ENCODE measurements at regions of chr6 and their contacts with region 1.

Region 1: GRCh38 chr6:42021847-42022754 is 28.2 kb upstream of the TAF8 start:
- DNase-seq: peak; percentile 98
- H3K4me3 ChIP-seq: peak overlapping the region; percentile 35
- H3K27ac ChIP-seq: peak overlapping the region; percentile 98
- H3K4me1 ChIP-seq: peaks cover 96% of the 10 kb centered on the region
- CTCF ChIP-seq: peak; percentile 45

Region 2: GRCh38 chr6:41705996-41706835 is 315.9 kb before region 1 on chr6:
- CTCF ChIA-PET with region 1: no interaction called
- POLR2A ChIA-PET with region 1: no interaction called
- intact Hi-C with region 1: loop called (anchors 5 kb)
- DNase-seq: peak; percentile 94
- H3K4me3 ChIP-seq: peak overlapping the region; percentile 69
- H3K27ac ChIP-seq: peak overlapping the region; percentile 90
- H3K4me1 ChIP-seq: peaks cover 74% of the 10 kb centered on the region
- CTCF ChIP-seq: peak; percentile 96

Region 3: GRCh38 chr6:41936073-41936837 is 85.8 kb before region 1 on chr6:
- CTCF ChIA-PET with region 1: interaction called, 9 read pairs
- POLR2A ChIA-PET with region 1: interaction called, 17 read pairs
- intact Hi-C with region 1: loop called (anchors 1 kb)
- DNase-seq: peak; percentile 81
- H3K4me3 ChIP-seq: peak overlapping the region; percentile 93
- H3K27ac ChIP-seq: peak overlapping the region; percentile 82
- H3K4me1 ChIP-seq: peaks cover 66% of the 10 kb centered on the region
- CTCF ChIP-seq: peak; percentile 86

Region 4: GRCh38 chr6:41958022-41958856 is 63.9 kb before region 1 on chr6:
- CTCF ChIA-PET with region 1: no interaction called
- POLR2A ChIA-PET with region 1: no interaction called
- intact Hi-C with region 1: no loop called
- DNase-seq: no peak
- H3K4me3 ChIP-seq: no peak overlapping the region
- H3K27ac ChIP-seq: no peak overlapping the region
- H3K4me1 ChIP-seq: peaks cover 6% of the 10 kb centered on the region
- CTCF ChIP-seq: no peak

Region 5: DNA sequence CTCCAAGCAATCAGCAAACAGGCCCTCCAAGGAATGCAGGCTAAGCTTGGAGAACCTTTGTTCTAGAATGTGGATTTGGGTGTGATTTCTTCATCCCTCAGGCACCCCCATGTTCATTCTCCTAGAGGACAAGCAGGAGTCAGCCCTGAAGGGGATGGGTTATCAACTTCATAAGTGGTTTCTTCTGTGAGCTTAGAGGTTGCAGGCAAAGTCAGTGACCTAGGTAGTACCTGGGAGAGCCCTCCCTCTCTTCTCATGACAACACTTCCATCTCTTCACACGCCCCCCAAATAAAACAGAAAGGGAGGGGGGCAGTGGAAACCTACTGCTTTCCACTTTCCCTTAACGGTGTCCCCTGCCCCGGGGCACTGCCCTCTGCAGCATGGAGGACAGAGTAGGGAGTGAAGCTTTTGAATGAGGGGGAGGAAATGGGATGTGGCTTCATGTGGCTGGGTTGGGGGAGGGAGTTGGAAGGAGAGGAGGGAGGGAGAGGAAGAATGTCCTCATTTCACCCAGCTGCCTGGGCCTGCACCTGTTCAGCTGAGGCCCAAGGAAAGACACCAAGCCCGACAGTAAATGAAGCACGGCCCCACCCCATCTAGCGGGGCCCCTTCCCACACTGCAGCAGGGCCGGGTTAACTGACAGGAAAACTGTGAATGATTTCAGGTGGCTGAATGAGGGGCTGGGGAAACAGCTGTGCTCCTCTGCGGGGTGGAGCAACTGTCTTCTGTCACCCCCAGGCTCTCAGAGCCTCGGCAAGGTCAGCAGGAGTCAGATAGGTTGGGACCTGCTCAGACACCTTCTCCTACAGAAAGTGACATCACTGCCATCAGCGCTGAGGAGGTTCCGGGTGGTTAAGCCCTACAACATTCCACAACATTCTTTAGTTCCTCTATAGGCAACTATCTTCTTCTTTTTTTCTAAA is 11.9 kb before region 1 on chr6:
- CTCF ChIA-PET with region 1: interaction called, 5 read pairs
- POLR2A ChIA-PET with region 1: interaction called, 60 read pairs
- intact Hi-C with region 1: loop called (anchors 1 kb)
- DNase-seq: peak; percentile 96
- H3K4me3 ChIP-seq: peak overlapping the region; percentile 57
- H3K27ac ChIP-seq: peak overlapping the region; percentile 97
- H3K4me1 ChIP-seq: peaks cover 91% of the 10 kb centered on the region
- CTCF ChIP-seq: peak; percentile 41; the same call in 1 of the 2 replicates

Region 6: DNA sequence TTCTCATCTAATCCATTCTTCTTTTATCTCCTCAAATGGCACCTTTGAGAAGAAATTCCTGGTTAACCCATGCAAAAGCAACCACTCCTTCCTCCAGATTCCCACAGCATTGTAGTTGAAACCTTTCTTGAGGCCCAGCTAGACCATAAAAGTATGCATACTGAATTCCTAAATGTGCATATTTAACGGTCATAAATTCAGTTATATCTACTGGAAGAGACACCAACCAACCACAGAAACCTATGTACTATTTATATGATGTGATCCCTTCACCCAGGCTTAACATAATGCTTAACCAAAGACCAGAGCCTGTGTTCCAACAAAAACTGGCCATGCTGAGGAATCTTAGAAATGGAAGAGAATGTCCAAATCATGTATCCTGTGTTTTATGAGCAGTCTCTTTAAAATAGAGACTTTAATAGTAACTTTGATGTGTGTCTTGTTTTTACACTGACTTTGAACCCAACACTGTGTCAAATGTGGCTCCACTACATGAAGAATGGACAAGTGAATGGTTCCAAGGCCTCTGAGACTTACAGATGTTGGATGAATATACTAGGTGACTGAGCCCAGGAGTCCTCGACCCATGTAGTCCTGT is 16.8 kb after region 1 on chr6:
- CTCF ChIA-PET with region 1: interaction called, 7 read pairs
- POLR2A ChIA-PET with region 1: interaction called, 29 read pairs
- intact Hi-C with region 1: loop called (anchors 1 kb)
- DNase-seq: no peak
- H3K4me3 ChIP-seq: peak overlapping the region; percentile 50
- H3K27ac ChIP-seq: peak overlapping the region; percentile 84
- H3K4me1 ChIP-seq: peaks cover 65% of the 10 kb centered on the region
- CTCF ChIP-seq: no peak

Region 7: GRCh38 chr6:42367353-42368011 is 345.4 kb after region 1 on chr6:
- CTCF ChIA-PET with region 1: no interaction called
- POLR2A ChIA-PET with region 1: no interaction called
- intact Hi-C with region 1: no loop called
- DNase-seq: peak; percentile 79
- H3K4me3 ChIP-seq: peak overlapping the region; percentile 28
- H3K27ac ChIP-seq: peak overlapping the region; percentile 53
- H3K4me1 ChIP-seq: peaks cover 43% of the 10 kb centered on the region
- CTCF ChIP-seq: no peak

Measured in OCI-LY7 (cell line).